HepG2 (cell line): ENCODE measurements at regions of chr5 and their contacts with region 1.

Region 1: DNA sequence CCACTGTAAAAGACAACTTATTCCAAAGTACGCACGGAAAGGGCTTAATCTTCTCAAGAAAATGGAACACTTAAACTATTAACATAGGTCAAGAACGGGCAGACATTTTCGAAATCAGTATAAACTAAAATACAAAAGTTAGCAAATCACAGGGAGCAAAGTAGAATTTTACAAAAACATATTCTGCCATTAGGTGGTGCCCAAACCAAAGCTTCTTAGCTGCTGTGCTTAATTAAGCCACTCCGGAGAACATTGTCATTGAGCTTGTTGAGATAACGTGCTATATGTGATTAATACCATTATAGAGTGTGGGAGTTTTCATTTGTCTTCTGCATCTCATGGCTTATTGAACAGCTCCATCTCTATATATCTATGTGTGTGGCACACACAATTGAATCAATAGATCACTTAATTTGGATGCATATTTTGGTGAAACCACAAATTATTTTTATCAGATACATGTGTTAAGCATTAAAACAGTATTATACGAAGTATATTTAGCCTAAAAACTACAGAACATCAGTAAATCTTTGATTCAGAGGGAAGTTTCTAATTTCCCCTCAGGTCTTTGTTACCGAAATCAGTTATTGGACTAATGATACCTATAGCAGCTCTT is 23.4 kb downstream of the UBLCP1 start:
- DNase-seq: peak; percentile 5
- ATAC-seq: peak; percentile 31; the same call in 2 of the 3 replicates
- H3K4me3 ChIP-seq: no peak overlapping the region
- H3K27ac ChIP-seq: no peak overlapping the region
- H3K4me1 ChIP-seq: no peaks in the 10 kb centered on the region
- H3K27me3 ChIP-seq: no peaks in the 10 kb centered on the region
- CTCF ChIP-seq: peak; percentile 46
- EP300 ChIP-seq: no peak
- POLR2A ChIP-seq: no peak
- RAD21 ChIP-seq: no peak

Region 2: GRCh38 chr5:159316519-159317383 is 30.2 kb after region 1 on chr5:
- CTCF ChIA-PET with region 1: no interaction called
- POLR2A ChIA-PET with region 1: no interaction called
- in situ Hi-C with region 1: no loop called
- intact Hi-C with region 1: loop called (anchors 2 kb)
- DNase-seq: peak; percentile 40
- ATAC-seq: peak; percentile 93
- H3K4me3 ChIP-seq: no peak overlapping the region
- H3K27ac ChIP-seq: no peak overlapping the region
- H3K4me1 ChIP-seq: no peaks in the 10 kb centered on the region
- H3K27me3 ChIP-seq: peaks cover 0 to 7% of the 10 kb centered on the region in 2 experiments; a peak in 3 of 5 replicates
- CTCF ChIP-seq: peak; percentile 84
- EP300 ChIP-seq: no peak
- POLR2A ChIP-seq: no peak
- RAD21 ChIP-seq: no peak; the same call in 1 of the 2 replicates

Region 3: GRCh38 chr5:159489779-159490178 is 203.3 kb after region 1 on chr5:
- CTCF ChIA-PET with region 1: no interaction called
- POLR2A ChIA-PET with region 1: no interaction called
- in situ Hi-C with region 1: no loop called
- intact Hi-C with region 1: no loop called
- DNase-seq: no peak
- ATAC-seq: no peak
- H3K4me3 ChIP-seq: no peak overlapping the region
- H3K27ac ChIP-seq: no peak overlapping the region
- H3K4me1 ChIP-seq: no peaks in the 10 kb centered on the region
- H3K27me3 ChIP-seq: peaks cover 0 to 4% of the 10 kb centered on the region in 2 experiments; a peak in 1 of 5 replicates
- CTCF ChIP-seq: no peak
- EP300 ChIP-seq: no peak
- POLR2A ChIP-seq: no peak
- RAD21 ChIP-seq: no peak